HepG2 (cell line): ENCODE measurements at regions of chr12 and their contacts with region 1.

Region 1: DNA sequence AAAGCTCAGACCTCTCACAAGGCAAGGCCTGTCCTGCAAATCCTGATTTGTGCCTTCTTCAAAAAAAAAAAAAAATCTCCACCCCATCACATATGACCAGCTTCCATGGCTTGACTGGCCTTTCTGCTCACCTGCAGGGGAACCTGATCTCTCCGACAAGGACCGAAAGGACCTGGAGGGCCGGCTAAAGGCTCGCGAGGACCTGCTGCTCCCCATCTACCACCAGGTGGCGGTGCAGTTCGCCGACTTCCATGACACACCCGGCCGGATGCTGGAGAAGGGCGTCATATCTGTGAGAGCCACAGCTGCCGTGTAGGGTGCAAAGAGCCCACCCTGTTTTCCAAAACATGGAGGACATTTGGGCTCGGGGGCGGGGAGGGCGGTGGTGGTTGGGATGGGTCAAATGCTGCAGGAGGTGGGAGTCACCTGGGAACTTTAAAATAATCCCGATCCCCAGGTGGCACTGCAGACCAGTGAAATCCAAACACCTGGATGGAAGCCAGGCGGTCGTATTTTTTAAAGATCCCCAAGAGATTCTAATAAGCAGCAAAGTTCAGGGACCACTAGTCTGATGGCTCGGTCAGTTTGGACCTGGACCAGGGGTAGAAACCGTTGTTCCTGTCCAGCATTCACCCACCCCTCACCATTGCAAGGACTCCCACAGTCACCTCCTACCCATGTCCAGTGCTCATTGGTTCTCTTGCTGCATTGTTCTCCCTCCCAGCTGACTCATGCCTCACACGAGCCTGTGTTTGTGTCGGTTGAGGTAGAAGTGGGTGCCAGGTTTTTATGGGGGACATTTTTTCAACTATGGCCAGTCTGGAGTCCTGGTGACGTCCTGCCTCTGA is 44.8 kb downstream of the FOXN4 start:
- DNase-seq: peak; percentile 67
- ATAC-seq: peak; percentile 95
- H3K4me3 ChIP-seq: no peak overlapping the region
- H3K27ac ChIP-seq: no peak overlapping the region
- H3K4me1 ChIP-seq: no peaks in the 10 kb centered on the region
- H3K27me3 ChIP-seq: no peaks in the 10 kb centered on the region
- CTCF ChIP-seq: peak; percentile 96
- EP300 ChIP-seq: no peak
- POLR2A ChIP-seq: no peak
- RAD21 ChIP-seq: peak; percentile 92

Region 2: DNA sequence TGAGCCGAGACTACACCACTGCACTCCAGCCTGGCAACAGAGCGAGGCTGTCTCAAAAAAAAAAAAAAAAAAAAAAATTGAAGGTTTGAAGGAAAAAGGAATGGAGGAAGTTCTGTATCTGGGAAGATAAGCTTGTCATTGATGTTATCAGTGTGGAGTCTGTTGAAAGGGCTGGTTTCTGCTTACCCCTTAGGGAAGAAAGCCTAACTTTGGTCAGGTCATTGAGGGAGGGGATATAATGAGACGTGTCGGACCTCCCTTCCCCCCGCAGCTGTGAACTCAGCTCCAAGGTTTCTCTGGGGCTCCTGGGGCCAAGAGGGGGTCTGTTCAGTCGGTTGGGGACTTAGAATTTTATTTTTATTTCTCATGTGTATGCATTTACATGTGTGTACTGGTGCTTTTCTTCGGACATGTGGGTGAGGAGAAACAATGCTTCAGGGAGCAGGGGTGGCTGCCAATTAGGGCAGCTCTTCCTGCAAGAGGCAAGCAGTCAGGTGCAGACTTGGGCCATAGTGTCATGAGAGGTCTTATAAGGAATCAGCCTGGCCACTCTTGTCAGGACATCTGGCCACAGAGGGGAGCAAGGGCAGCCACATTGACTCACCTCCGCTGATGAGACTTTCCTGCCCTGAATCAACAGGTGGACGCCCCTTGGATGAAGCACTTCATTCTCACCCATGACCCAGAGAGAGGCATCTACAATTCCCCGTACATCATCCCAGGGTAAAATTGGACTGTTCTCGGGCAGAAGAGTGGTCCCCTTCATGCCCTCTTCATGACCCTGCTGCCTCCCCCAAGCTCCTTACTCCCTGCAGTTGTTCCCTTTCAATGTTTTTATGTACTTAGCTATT is 367.7 kb before region 1 on chr12:
- CTCF ChIA-PET with region 1: no interaction called
- POLR2A ChIA-PET with region 1: no interaction called
- in situ Hi-C with region 1: no loop called
- intact Hi-C with region 1: no loop called
- DNase-seq: no peak
- ATAC-seq: no peak
- H3K4me3 ChIP-seq: no peak overlapping the region
- H3K27ac ChIP-seq: no peak overlapping the region
- H3K4me1 ChIP-seq: no peaks in the 10 kb centered on the region
- H3K27me3 ChIP-seq: no peaks in the 10 kb centered on the region
- CTCF ChIP-seq: no peak
- EP300 ChIP-seq: no peak
- POLR2A ChIP-seq: no peak
- RAD21 ChIP-seq: no peak

Region 3: GRCh38 chr12:109346920-109347319 is 82.6 kb after region 1 on chr12:
- CTCF ChIA-PET with region 1: no interaction called
- POLR2A ChIA-PET with region 1: no interaction called
- in situ Hi-C with region 1: no loop called
- intact Hi-C with region 1: no loop called
- DNase-seq: no peak
- ATAC-seq: no peak
- H3K4me3 ChIP-seq: no peak overlapping the region
- H3K27ac ChIP-seq: no peak overlapping the region
- H3K4me1 ChIP-seq: no peaks in the 10 kb centered on the region
- H3K27me3 ChIP-seq: no peaks in the 10 kb centered on the region
- CTCF ChIP-seq: no peak
- EP300 ChIP-seq: no peak
- POLR2A ChIP-seq: no peak
- RAD21 ChIP-seq: no peak

Region 4: GRCh38 chr12:109385339-109386067 is 121.2 kb after region 1 on chr12:
- CTCF ChIA-PET with region 1: interaction called, 87 read pairs
- POLR2A ChIA-PET with region 1: no interaction called
- in situ Hi-C with region 1: loop called (anchors 5 kb)
- intact Hi-C with region 1: loop called (anchors 1 kb)
- DNase-seq: peak; percentile 32
- ATAC-seq: peak; percentile 21; the same call in 2 of the 3 replicates
- H3K4me3 ChIP-seq: no peak overlapping the region
- H3K27ac ChIP-seq: no peak overlapping the region
- H3K4me1 ChIP-seq: peaks cover 16% of the 10 kb centered on the region
- H3K27me3 ChIP-seq: no peaks in the 10 kb centered on the region
- CTCF ChIP-seq: peak; percentile 63
- EP300 ChIP-seq: no peak
- POLR2A ChIP-seq: no peak
- RAD21 ChIP-seq: peak; percentile 66

Region 5: DNA sequence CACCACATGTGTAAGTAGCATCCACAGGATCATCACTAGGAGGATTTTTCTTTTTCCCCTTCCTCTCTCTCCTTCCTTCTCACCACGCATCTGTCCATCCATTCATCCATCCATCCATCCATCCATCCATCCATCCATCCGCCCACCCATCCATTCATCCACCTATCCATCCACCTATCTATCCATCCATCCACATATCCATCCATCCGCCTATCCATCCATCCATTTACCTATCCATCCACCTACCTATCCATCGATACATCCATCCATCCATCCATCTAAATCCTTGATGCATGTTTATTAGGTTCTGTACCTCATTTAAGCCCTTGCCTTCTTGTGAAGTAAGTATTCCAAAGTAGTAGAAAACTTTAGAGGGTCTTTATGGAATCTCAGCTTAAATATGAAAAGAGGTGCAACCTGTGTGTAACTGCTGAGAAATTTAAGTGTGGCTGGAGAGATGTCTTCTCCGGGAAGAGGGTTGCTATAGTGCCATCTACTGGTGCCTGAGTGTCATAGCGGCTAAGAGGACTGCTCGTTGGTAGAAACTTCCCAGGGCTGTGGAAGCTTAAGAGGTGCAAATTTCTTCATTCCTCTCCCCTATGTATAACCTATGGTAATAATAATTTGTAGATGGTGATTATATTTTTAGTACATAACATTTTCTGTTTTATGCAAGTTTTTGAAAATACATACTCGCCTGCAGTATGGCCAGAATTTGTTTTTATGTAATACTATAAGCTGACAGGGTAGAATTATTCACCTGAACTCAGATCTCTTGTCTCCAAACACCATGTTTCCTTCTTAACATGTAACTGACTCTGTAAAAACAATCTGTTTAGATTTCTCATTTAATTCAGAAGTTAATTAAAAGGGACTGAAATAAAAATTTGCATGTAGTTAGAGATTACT is 129.4 kb after region 1 on chr12:
- CTCF ChIA-PET with region 1: interaction called, 12 read pairs
- POLR2A ChIA-PET with region 1: no interaction called
- in situ Hi-C with region 1: loop called (anchors 5 kb)
- intact Hi-C with region 1: no loop called
- DNase-seq: peak; percentile 35
- ATAC-seq: peak; percentile 65
- H3K4me3 ChIP-seq: no peak overlapping the region
- H3K27ac ChIP-seq: no peak overlapping the region
- H3K4me1 ChIP-seq: no peaks in the 10 kb centered on the region
- H3K27me3 ChIP-seq: 0 out of 5 replicates have a peak, but pooled peaks cover 0 to 4% of the 10 kb centered on the region in 2 experiments
- CTCF ChIP-seq: peak; percentile 76
- EP300 ChIP-seq: no peak
- POLR2A ChIP-seq: no peak
- RAD21 ChIP-seq: no peak